ENCODE measurements at regions of chr1 and their contacts with region 1.

Region 1: GRCh38 chr1:153494976-153495535 is 34.6 kb upstream of the S100A7 start:
- DNase-seq: peak; percentile 32 to 90 (median 73)
- ATAC-seq: peak in 3 of 4 donors; percentile 72 to 79 (median 78)
- H3K4me3 ChIP-seq: no peak overlapping the region
- H3K27ac ChIP-seq: no peak overlapping the region
- H3K4me1 ChIP-seq: no peaks in the 10 kb centered on the region
- H3K27me3 ChIP-seq: no peaks in the 10 kb centered on the region
- CTCF ChIP-seq: peak; percentile 60 to 88 (median 85)

Region 2: DNA sequence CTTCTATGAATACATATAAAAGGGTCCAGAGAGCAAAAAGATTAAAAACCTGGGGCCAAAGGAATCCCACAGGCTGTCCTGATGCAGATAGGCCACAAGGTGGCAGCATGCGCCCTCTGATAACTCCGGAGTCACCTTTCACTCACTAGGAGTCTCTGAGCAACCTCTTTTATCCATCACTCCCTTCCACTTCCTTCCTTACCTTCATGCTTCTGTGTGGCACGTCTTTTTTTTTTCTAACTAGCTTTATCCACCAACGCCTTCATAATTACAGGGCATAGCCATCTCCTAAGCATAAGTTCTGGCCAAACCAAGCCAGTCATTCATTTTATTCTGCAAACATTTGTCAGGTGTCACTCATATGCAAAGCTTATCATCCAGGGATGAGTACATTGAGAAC is 142.5 kb before region 1 on chr1:
- intact Hi-C with region 1: loop called in 2 of 3 experiments (anchors 5 kb)
- DNase-seq: peak in 5 of 6 donors; percentile 23 to 81 (median 57)
- ATAC-seq: peak; percentile 69 to 92 (median 88)
- H3K4me3 ChIP-seq: no peak overlapping the region
- H3K27ac ChIP-seq: no peak overlapping the region
- H3K4me1 ChIP-seq: no peaks in the 10 kb centered on the region
- H3K27me3 ChIP-seq: peaks cover 0 to 16% (median 0%) of the 10 kb centered on the region in 4 donors
- CTCF ChIP-seq: peak; percentile 83 to 93 (median 88)

Measured in pancreas (tissue), 10 donors.